ENCODE measurements at regions of chr16 and their contacts with region 1.

Region 1: GRCh38 chr16:52191531-52192134 is 355.3 kb downstream of the TOX3 start:
- DNase-seq: peak; percentile 81
- ATAC-seq: peak; percentile 46
- H3K4me3 Mint-ChIP-seq: no peak overlapping the region
- H3K27ac Mint-ChIP-seq: no peak overlapping the region
- H3K4me1 Mint-ChIP-seq: peaks cover 17% of the 10 kb centered on the region
- H3K27me3 Mint-ChIP-seq: no peaks in the 10 kb centered on the region
- CTCF ChIP-seq: peak; percentile 93

Region 2: DNA sequence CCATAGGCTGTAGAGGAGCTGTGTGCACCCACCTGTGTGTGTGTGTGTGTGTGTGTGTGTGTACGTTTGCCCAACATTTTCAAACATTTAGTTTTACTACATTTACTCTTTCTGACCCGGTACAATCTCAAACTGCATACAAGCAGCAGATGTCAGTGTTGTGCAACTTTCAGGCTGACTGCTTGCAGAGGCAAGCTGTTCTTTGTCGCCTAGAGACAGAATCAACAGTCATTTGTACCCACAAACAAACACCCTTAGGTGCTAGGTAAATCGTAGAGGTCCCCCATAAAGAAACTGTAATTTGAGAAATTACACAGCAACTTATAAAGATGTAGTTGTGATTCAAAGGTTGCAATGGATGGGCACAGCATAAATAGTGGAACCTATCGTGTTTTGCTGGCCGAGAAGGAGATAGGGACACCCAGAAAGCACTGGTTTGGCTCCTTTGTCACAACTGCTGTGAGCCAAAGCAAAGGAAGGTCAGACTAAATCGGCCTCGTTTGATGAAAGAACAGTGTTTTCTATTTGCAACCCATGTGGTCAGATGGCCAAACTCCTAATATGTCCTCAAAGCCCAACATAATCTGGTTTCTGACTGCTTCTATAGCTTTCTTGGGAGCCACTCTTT is 123.1 kb before region 1 on chr16:
- CTCF ChIA-PET with region 1: interaction called, 30 read pairs
- POLR2A ChIA-PET with region 1: no interaction called
- DNase-seq: peak; percentile 44
- ATAC-seq: peak; percentile 58; the same call in 1 of the 2 replicates
- H3K4me3 Mint-ChIP-seq: no peak overlapping the region
- H3K27ac Mint-ChIP-seq: no peak overlapping the region
- H3K4me1 Mint-ChIP-seq: peaks cover 3% of the 10 kb centered on the region
- H3K27me3 Mint-ChIP-seq: no peaks in the 10 kb centered on the region
- CTCF ChIP-seq: no peak

Region 3: GRCh38 chr16:52128361-52128760 is 63.3 kb before region 1 on chr16:
- CTCF ChIA-PET with region 1: no interaction called
- POLR2A ChIA-PET with region 1: no interaction called
- DNase-seq: no peak
- ATAC-seq: no peak
- H3K4me3 Mint-ChIP-seq: no peak overlapping the region
- H3K27ac Mint-ChIP-seq: no peak overlapping the region
- H3K4me1 Mint-ChIP-seq: peaks cover 8% of the 10 kb centered on the region
- H3K27me3 Mint-ChIP-seq: no peaks in the 10 kb centered on the region; the same call in 1 of the 2 replicates
- CTCF ChIP-seq: no peak

Region 4: GRCh38 chr16:52469775-52470174 is 278.1 kb after region 1 on chr16:
- CTCF ChIA-PET with region 1: interaction called, 12 read pairs
- POLR2A ChIA-PET with region 1: no interaction called
- DNase-seq: no peak
- ATAC-seq: peak; percentile 32; the same call in 1 of the 2 replicates
- H3K4me3 Mint-ChIP-seq: 0 out of 2 replicates have a peak overlapping the region, but pooled peaks have one; percentile 20
- H3K27ac Mint-ChIP-seq: no peak overlapping the region
- H3K4me1 Mint-ChIP-seq: peaks cover 74% of the 10 kb centered on the region
- H3K27me3 Mint-ChIP-seq: no peaks in the 10 kb centered on the region
- CTCF ChIP-seq: no peak

Region 5: DNA sequence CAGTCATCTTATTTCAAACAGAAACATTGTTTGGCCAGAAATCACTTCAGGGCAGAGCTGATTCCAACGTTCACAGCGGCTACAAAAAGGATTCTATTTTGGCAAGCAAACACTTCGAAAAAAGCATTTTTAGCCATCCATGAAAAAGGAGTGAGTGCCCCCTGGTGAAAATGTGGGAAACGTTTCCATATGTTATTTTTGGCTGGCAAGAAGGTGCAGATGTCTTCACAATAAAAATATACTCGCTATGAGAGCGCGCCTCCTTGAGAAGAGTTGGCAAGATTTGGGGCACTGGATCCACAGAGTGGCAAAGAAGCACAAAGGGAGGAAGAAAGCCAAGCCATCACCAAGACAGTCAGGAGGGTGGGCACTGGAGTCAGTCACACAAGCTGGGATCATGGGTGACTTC is 670.0 kb after region 1 on chr16:
- CTCF ChIA-PET with region 1: interaction called, 26 read pairs
- POLR2A ChIA-PET with region 1: no interaction called
- DNase-seq: peak; percentile 17
- ATAC-seq: no peak; the same call in 1 of the 2 replicates
- H3K4me3 Mint-ChIP-seq: no peak overlapping the region
- H3K27ac Mint-ChIP-seq: no peak overlapping the region
- H3K4me1 Mint-ChIP-seq: peaks cover 14% of the 10 kb centered on the region
- H3K27me3 Mint-ChIP-seq: no peaks in the 10 kb centered on the region; the same call in 1 of the 2 replicates
- CTCF ChIP-seq: 0 out of 2 replicates have a peak, but pooled peaks have one; percentile 34

Region 6: DNA sequence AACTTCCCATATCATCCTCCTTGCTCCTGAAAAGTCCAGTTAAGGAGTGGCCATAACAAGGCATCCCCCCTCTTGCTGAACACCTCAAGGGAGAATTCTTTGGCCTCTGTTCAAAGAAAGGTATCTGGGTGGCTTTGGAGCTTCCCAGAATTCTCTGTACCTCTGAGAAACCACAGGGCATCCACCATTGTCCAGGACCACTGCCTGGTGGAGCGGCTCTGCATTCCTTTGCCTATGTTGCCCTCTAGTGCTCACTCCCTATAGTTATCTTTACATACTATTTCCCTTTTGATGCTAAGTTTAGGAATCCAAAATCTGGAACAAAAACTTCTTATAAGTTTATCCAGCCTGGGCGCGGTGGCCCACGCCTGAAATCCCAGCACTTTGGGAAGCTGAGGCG is 830.7 kb after region 1 on chr16:
- CTCF ChIA-PET with region 1: interaction called, 10 read pairs
- POLR2A ChIA-PET with region 1: no interaction called
- DNase-seq: peak; percentile 51
- ATAC-seq: peak; percentile 96
- H3K4me3 Mint-ChIP-seq: no peak overlapping the region
- H3K27ac Mint-ChIP-seq: no peak overlapping the region
- H3K4me1 Mint-ChIP-seq: peaks cover 13% of the 10 kb centered on the region; the same call in 1 of the 2 replicates
- H3K27me3 Mint-ChIP-seq: no peaks in the 10 kb centered on the region
- CTCF ChIP-seq: peak; percentile 64